ENCODE measurements at regions of chr1 and their contacts with region 1.

Region 1: GRCh38 chr1:29395736-29396437 is 159.6 kb downstream of the PTPRU start:
- DNase-seq: no peak
- ATAC-seq: peak in 3 of 4 donors; percentile 29 to 59 (median 43)
- H3K4me3 ChIP-seq: no peak overlapping the region
- H3K27ac ChIP-seq: no peak overlapping the region
- H3K4me1 ChIP-seq: no peaks in the 10 kb centered on the region
- H3K27me3 ChIP-seq: no peaks in the 10 kb centered on the region
- CTCF ChIP-seq: no peak
- POLR2A ChIP-seq: no peak

Region 2: GRCh38 chr1:30409476-30410152 is 1013.7 kb after region 1 on chr1:
- intact Hi-C with region 1: loop called in 1 of 2 experiments (anchors 2 kb)
- DNase-seq: no peak
- ATAC-seq: no peak
- H3K4me3 ChIP-seq: no peak overlapping the region
- H3K27ac ChIP-seq: no peak overlapping the region
- H3K4me1 ChIP-seq: no peaks in the 10 kb centered on the region
- H3K27me3 ChIP-seq: no peaks in the 10 kb centered on the region
- CTCF ChIP-seq: no peak
- POLR2A ChIP-seq: no peak